ENCODE measurements at regions of chr19 and their contacts with region 1.

Region 1: GRCh38 chr19:2722541-2723344 is 1.6 kb upstream of the DIRAS1 start:
- DNase-seq: no peak
- H3K4me3 ChIP-seq: no peak overlapping the region; a peak in 1 of 8 replicates
- H3K27ac ChIP-seq: no peak overlapping the region
- H3K4me1 ChIP-seq: peaks cover 0 to 20% (median 6%) of the 10 kb centered on the region in 4 experiments; a peak in 6 of 7 replicates
- H3K27me3 ChIP-seq: peaks cover 0 to 7% (median 3%) of the 10 kb centered on the region in 4 experiments; a peak in 4 of 7 replicates
- CTCF ChIP-seq: no peak
- EP300 ChIP-seq: no peak
- POLR2A ChIP-seq: no peak
- RAD21 ChIP-seq: no peak

Region 2: GRCh38 chr19:2524838-2525723 is 197.7 kb before region 1 on chr19:
- CTCF ChIA-PET with region 1: no interaction called
- POLR2A ChIA-PET with region 1: no interaction called
- DNase-seq: no peak
- H3K4me3 ChIP-seq: no peak overlapping the region
- H3K27ac ChIP-seq: peak overlapping the region; percentile 37; the same call in 1 of the 2 replicates
- H3K4me1 ChIP-seq: peaks cover 0 to 13% (median 5%) of the 10 kb centered on the region in 4 experiments; a peak in 4 of 7 replicates
- H3K27me3 ChIP-seq: no peaks in the 10 kb centered on the region
- CTCF ChIP-seq: no peak
- EP300 ChIP-seq: no peak
- POLR2A ChIP-seq: no peak
- RAD21 ChIP-seq: no peak

Region 3: GRCh38 chr19:2733930-2734588 is 11.3 kb after region 1 on chr19:
- CTCF ChIA-PET with region 1: interaction called, 16 read pairs
- POLR2A ChIA-PET with region 1: interaction called, 8 read pairs
- DNase-seq: no peak
- H3K4me3 ChIP-seq: no peak overlapping the region
- H3K27ac ChIP-seq: no peak overlapping the region
- H3K4me1 ChIP-seq: no peaks in the 10 kb centered on the region
- H3K27me3 ChIP-seq: no peaks in the 10 kb centered on the region
- CTCF ChIP-seq: no peak
- EP300 ChIP-seq: no peak
- POLR2A ChIP-seq: no peak
- RAD21 ChIP-seq: no peak

Region 4: GRCh38 chr19:2739602-2740313 is 17.0 kb after region 1 on chr19 and contains the start of gene SLC39A3:
- CTCF ChIA-PET with region 1: interaction called, 16 read pairs
- POLR2A ChIA-PET with region 1: interaction called, 8 read pairs
- DNase-seq: peak; percentile 96 to 100
- H3K4me3 ChIP-seq: peak within 1 kb of the TSS; percentile 79 to 96 (median 84)
- H3K27ac ChIP-seq: no peak within 1 kb of the TSS
- H3K4me1 ChIP-seq: no peaks in the 10 kb centered on the region
- H3K27me3 ChIP-seq: no peaks in the 10 kb centered on the region
- CTCF ChIP-seq: no peak; a peak in 1 of 4 replicates
- EP300 ChIP-seq: peak in 1 of 2 experiments; percentile 89; a peak in 2 of 3 replicates
- POLR2A ChIP-seq: no peak; a peak in 1 of 3 replicates
- RAD21 ChIP-seq: peak in 1 of 2 experiments; percentile 42; a peak in 2 of 4 replicates
- total RNA-seq, gene SLC39A3: 33.0 and 35.8 TPM in 2 replicates

Measured in H1 (cell line).